ENCODE measurements at regions of chr19 and their contacts with region 1.

Region 1: GRCh38 chr19:46788262-46788967 is at the start of gene SLC1A5:
- DNase-seq: peak; percentile 91 to 98 (median 96)
- ATAC-seq: peak; percentile 76
- H3K4me3 ChIP-seq: peak within 1 kb of the TSS; percentile 67 to 85
- H3K4me3 Mint-ChIP-seq: peak within 1 kb of the TSS; percentile 85
- H3K27ac ChIP-seq: peak within 1 kb of the TSS; percentile 51 to 69
- H3K27ac Mint-ChIP-seq: peak within 1 kb of the TSS; percentile 79
- H3K4me1 ChIP-seq: peaks cover 60% of the 10 kb centered on the region
- H3K4me1 Mint-ChIP-seq: peaks cover 59% of the 10 kb centered on the region
- H3K27me3 ChIP-seq: no peaks in the 10 kb centered on the region
- H3K27me3 Mint-ChIP-seq: no peaks in the 10 kb centered on the region
- CTCF ChIP-seq: no peak
- total RNA-seq, gene SLC1A5: 16.6 to 17.4 TPM

Region 2: GRCh38 chr19:46000491-46001246 is 787.7 kb before region 1 on chr19:
- CTCF ChIA-PET with region 1: no interaction called
- POLR2A ChIA-PET with region 1: no interaction called
- intact Hi-C with region 1: no loop called
- DNase-seq: peak; percentile 59 to 87 (median 74)
- ATAC-seq: peak; percentile 99
- H3K4me3 ChIP-seq: peak overlapping the region; percentile 18 to 43
- H3K4me3 Mint-ChIP-seq: peak overlapping the region; percentile 73
- H3K27ac ChIP-seq: no peak overlapping the region
- H3K27ac Mint-ChIP-seq: no peak overlapping the region
- H3K4me1 ChIP-seq: peaks cover 18% of the 10 kb centered on the region
- H3K4me1 Mint-ChIP-seq: peaks cover 35% of the 10 kb centered on the region
- H3K27me3 ChIP-seq: no peaks in the 10 kb centered on the region
- H3K27me3 Mint-ChIP-seq: no peaks in the 10 kb centered on the region
- CTCF ChIP-seq: no peak

Region 3: DNA sequence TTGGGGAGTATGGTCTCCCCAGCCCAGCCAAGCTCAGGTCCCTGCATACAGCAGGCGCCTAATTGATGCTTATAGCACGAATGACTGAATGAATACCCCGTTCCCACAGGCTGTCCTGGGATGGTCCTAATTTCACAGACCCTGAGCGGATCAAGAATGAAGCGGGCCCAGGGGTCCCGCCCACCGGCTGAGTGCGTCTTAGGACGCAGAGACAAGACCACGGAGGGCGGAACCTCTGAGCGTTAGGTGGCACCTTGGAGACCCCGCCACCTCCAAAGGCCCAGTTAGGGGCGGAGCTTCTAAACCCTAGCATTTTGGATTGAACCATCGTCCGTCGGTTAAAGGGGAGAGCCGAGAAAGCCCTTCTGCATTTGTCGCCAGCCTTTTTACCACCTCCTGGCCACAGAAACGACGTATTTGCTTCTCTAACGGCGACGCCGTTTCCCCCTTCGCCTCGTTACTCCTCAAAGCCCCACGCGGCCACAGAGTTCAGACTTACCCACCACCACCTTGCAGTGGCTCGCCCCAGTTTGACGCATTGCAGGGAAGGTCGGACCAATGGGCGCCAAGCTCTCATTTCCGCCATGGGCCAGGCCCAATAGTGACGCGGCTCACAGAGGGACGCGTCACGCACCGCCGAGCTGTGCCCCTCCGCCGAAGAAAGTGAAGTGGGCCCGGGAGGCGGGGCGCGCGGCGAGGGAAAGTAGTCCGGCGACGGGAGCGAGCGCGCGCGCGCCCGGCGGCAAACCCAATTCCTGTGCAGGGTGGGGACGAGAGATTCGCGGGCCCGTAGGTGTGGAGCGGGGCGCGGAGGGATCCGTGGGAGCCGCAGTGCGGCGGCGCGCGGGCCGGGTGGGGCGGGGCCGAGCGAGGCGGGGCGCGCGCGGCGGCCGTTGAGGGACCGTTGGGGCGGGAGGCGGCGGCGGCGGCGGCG is 187.8 kb before region 1 on chr19:
- CTCF ChIA-PET with region 1: no interaction called
- POLR2A ChIA-PET with region 1: no interaction called
- intact Hi-C with region 1: loop called (anchors 1 to 2 kb)
- DNase-seq: peak; percentile 95 to 99 (median 97)
- ATAC-seq: peak; percentile 89
- H3K4me3 ChIP-seq: peak overlapping the region; percentile 88 to 99
- H3K4me3 Mint-ChIP-seq: peak overlapping the region; percentile 96
- H3K27ac ChIP-seq: peak overlapping the region; percentile 100
- H3K27ac Mint-ChIP-seq: peak overlapping the region; percentile 100
- H3K4me1 ChIP-seq: peaks cover 34% of the 10 kb centered on the region
- H3K4me1 Mint-ChIP-seq: peaks cover 38% of the 10 kb centered on the region
- H3K27me3 ChIP-seq: no peaks in the 10 kb centered on the region
- H3K27me3 Mint-ChIP-seq: no peaks in the 10 kb centered on the region
- CTCF ChIP-seq: no peak

Region 4: GRCh38 chr19:46766569-46767317 is 21.7 kb before region 1 on chr19:
- CTCF ChIA-PET with region 1: interaction called, 39 read pairs
- POLR2A ChIA-PET with region 1: no interaction called
- intact Hi-C with region 1: no loop called
- DNase-seq: peak in 6 of 9 experiments; percentile 55 to 76 (median 68)
- ATAC-seq: peak; percentile 80
- H3K4me3 ChIP-seq: no peak overlapping the region
- H3K4me3 Mint-ChIP-seq: no peak overlapping the region
- H3K27ac ChIP-seq: no peak overlapping the region
- H3K27ac Mint-ChIP-seq: no peak overlapping the region
- H3K4me1 ChIP-seq: no peaks in the 10 kb centered on the region
- H3K4me1 Mint-ChIP-seq: peaks cover 2% of the 10 kb centered on the region
- H3K27me3 ChIP-seq: no peaks in the 10 kb centered on the region
- H3K27me3 Mint-ChIP-seq: no peaks in the 10 kb centered on the region
- CTCF ChIP-seq: peak; percentile 57

Region 5: DNA sequence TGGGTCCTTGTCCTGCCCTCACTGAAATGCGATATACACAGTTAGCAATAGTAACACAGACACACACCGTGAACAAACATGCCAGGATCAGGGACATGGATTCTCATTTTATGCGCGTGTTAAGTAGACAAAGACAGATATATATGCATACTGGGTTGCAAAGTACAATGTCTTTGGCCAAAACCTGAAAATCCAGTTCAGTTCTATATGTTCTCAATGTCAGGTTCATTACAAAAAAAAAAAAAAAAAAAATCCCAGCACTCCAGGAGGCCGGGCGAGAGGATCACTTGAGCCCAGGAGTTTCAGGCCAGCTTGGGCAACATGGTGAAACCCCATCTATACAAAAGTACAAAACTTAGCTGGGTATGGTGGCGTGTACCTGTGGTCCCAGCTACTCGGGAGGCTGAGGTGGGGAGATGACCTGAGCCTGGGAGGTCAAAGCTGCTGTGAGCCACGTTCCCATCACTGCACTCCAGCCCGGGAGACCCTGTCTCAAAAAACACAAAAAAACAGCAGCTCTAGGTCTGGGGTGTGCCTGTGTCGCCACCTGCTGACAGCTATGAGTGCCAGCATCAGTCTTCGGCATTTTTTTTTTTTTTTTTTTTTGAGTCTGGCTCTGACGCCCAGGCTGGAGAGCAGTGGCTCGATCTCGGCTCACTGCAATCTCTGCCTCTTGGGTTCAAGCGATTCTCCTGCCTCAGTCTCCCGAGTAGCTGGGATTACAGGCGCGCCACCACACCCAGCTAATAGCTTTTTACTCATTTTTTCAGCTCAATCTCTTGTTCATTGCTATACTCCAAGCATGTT is 51.9 kb after region 1 on chr19:
- CTCF ChIA-PET with region 1: interaction called, 29 read pairs
- POLR2A ChIA-PET with region 1: no interaction called
- intact Hi-C with region 1: loop called in 1 of 2 experiments (anchors 2 kb)
- DNase-seq: peak in 6 of 9 experiments; percentile 52 to 83 (median 62)
- ATAC-seq: peak; percentile 95
- H3K4me3 ChIP-seq: no peak overlapping the region
- H3K4me3 Mint-ChIP-seq: no peak overlapping the region
- H3K27ac ChIP-seq: no peak overlapping the region
- H3K27ac Mint-ChIP-seq: no peak overlapping the region
- H3K4me1 ChIP-seq: no peaks in the 10 kb centered on the region
- H3K4me1 Mint-ChIP-seq: no peaks in the 10 kb centered on the region
- H3K27me3 ChIP-seq: no peaks in the 10 kb centered on the region
- H3K27me3 Mint-ChIP-seq: no peaks in the 10 kb centered on the region
- CTCF ChIP-seq: peak; percentile 77

Region 6: DNA sequence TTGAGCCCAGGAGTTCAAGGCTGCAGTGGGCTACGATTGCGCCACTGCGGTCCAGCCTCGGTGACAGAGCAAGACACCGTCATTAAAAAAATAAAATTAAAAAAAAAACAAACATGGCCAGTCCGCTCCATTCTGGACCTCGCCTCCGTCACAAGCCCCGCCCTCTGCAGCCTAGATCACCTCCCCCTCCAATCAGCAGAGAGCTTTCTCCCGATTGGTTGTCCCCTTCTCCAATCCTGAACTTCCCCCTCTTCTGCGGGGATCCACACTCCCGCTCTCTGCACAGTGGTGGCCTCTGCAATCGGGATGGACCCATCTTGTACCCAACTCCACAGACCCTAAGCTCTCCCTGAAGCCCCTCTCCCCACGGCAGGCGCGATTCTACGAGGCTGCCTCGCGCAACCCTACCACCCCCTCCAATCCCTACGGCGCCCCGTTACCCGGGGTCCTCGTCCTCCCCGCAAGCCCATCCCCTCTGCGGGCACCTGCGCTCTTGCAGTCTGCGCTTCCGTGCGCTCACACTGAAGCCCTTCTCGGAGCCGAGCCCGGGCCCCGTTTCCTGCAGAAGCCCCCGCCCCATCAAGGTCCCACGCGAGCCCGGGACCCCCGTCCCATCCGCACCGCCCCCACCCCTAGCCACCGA is 259.5 kb after region 1 on chr19:
- CTCF ChIA-PET with region 1: no interaction called
- POLR2A ChIA-PET with region 1: no interaction called
- intact Hi-C with region 1: loop called in 1 of 2 experiments (anchors 2 kb)
- DNase-seq: peak; percentile 22 to 85 (median 65)
- ATAC-seq: peak; percentile 37
- H3K4me3 ChIP-seq: peak overlapping the region; percentile 67 to 96
- H3K4me3 Mint-ChIP-seq: peak overlapping the region; percentile 98
- H3K27ac ChIP-seq: peak overlapping the region; percentile 31 to 62
- H3K27ac Mint-ChIP-seq: peak overlapping the region; percentile 91
- H3K4me1 ChIP-seq: peaks cover 8% of the 10 kb centered on the region
- H3K4me1 Mint-ChIP-seq: peaks cover 20% of the 10 kb centered on the region
- H3K27me3 ChIP-seq: no peaks in the 10 kb centered on the region
- H3K27me3 Mint-ChIP-seq: no peaks in the 10 kb centered on the region
- CTCF ChIP-seq: no peak

Region 7: GRCh38 chr19:47330466-47330869 is 542.1 kb after region 1 on chr19:
- CTCF ChIA-PET with region 1: no interaction called
- POLR2A ChIA-PET with region 1: no interaction called
- intact Hi-C with region 1: no loop called
- DNase-seq: no peak
- ATAC-seq: no peak
- H3K4me3 ChIP-seq: no peak overlapping the region
- H3K4me3 Mint-ChIP-seq: no peak overlapping the region
- H3K27ac ChIP-seq: no peak overlapping the region
- H3K27ac Mint-ChIP-seq: no peak overlapping the region
- H3K4me1 ChIP-seq: no peaks in the 10 kb centered on the region
- H3K4me1 Mint-ChIP-seq: no peaks in the 10 kb centered on the region
- H3K27me3 ChIP-seq: no peaks in the 10 kb centered on the region
- H3K27me3 Mint-ChIP-seq: peaks cover 12% of the 10 kb centered on the region
- CTCF ChIP-seq: no peak

Measured in CD8-positive, alpha-beta T cell (primary cell).